Cardiac septum (tissue), 1 donor: ENCODE measurements at regions of chr2 and their contacts with region 1.

Region 1: DNA sequence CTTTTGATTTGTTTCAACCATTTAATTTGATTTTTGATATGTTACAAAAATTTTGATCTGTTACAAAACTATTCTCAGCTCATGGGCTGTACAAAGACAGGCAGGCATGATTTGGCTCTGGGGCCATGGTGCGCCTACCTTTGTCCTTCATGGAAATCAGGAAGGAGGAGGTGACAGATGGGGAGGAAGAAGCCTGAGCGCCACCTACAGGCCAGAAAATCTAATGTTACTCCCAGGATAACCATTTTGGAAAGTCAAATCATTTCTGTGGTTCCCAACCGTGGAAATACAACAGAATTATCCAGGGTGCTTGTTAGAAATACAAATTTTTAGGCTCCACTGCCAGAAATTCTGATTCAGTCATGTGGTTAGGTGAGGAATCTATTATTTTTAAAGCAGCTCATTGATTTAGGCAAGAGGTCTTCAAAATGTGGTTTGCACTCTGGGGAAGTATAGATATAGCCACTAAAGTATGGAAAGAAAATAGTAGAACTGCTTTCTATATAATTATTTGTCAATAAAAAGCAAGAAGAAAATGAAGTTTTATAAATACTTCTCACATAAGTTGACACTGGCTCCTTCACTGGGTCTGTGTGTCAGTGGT is 93.9 kb downstream of the EVA1A start:
- DNase-seq: no peak

Region 2: DNA sequence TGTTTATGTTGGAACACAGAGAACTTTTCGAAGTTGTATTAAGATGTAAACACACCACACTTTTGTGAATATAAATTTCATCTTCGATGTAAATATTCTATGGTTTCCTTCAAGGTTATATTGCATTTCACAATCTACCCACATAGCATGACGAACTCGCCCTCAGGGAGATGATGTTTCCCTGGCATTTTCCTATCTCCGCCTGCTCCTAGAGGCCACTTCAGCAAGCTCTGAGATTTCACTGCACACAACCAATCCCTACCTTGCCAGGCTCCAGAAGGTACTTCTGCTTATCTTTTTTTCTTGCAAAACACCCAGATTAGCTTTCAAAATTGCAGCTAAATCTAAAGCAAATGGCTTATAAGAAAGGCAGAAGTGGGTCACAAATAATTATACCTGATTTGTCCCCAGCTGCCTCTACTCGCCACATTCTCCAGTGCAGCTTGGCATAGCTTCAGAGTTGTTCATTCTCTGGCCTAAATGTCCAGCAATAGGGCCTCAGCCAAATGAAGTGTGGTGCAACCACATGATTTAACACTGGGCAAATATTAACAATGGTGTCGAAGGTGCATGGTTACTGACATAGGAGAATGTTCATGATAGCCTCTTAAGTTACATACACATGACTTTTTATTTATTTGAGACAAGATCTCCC is 147.4 kb after region 1 on chr2:
- intact Hi-C with region 1: loop called (anchors 5 kb)
- DNase-seq: no peak